Heart left ventricle (tissue), 16 donors: ENCODE measurements at regions of chr5 and their contacts with region 1.

Region 1: DNA sequence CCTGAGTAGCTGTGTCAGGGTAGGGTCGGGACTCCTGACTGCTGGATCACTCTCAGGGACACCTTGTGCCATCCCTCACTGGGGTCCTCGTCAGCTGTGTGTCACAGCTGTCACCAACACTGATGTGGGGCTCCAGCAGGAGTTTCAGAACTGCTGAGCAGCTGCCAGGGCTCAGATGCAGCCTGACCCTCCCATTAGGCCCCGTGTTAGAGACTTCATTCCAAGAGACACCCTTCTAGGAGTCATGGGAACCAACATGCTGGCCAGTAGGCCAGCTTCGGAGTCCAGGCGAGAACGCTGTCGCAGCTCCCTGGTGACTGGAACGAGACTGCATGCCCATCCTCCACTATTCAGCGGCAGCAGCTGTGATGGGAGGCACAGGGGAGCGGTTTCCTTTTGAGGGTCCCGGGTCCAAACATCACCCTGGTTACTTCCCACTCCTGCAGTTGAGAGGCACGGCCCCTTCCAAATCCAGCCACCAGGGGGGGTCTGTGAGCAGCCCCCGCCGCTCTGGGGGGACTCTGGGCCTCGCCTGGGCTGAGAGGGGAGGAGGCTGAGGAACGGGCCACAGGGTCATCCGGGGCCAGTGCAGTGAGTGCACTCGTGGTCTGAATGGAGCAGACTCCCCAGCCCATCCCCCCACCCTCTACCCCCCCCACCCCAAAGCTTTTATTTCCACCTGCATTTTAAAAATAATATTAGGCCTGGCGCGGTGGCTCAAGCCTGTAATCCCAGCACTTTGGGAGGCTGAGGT is 12.6 kb upstream of the TCF7 start:
- DNase-seq: peak in 4 of 5 donors; percentile 53 to 86 (median 63)
- ATAC-seq: peak; percentile 47 to 85 (median 78)
- H3K4me3 ChIP-seq: no peak overlapping the region
- H3K27ac ChIP-seq: no peak overlapping the region
- H3K4me1 ChIP-seq: peaks cover 0 to 34% (median 6%) of the 10 kb centered on the region in 12 donors
- H3K27me3 ChIP-seq: no peaks in the 10 kb centered on the region
- CTCF ChIP-seq: peak; percentile 78 to 96 (median 86)
- POLR2A ChIP-seq: no peak

Region 2: DNA sequence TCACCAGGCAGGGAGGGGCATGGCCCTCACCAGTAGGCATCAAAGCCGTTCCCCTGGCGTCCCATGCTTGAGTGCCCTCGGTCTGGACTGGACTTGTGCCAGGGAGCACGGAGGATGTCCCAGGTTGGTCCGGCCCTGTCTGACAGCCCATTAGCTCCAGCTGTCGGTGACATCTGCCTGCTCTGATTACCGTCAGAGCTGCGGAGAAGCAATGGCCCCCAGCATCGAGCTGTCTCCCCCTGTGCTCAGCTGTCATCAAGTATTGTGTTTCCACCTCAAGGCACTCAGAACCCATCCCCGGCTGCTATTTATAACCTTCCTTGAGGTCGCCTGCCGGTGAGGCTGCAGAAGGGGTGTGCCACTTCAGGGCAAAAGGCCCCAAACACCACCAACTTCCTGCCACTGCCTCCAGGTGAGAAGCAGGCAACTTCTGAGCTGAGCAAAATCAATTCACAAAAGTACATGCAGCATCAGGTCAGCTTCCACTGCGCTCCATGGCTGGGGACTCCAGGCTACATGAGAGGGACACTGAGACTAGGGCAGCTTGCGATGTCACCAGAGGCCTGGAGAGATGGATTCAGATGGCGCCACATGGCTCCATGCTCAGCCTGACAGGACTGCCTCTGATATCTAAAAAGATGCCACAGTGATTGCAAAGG is 276.1 kb before region 1 on chr5:
- intact Hi-C with region 1: no loop called
- DNase-seq: peak in 3 of 5 donors; percentile 40 to 68 (median 50)
- ATAC-seq: peak in 3 of 4 donors; percentile 13 to 64 (median 33)
- H3K4me3 ChIP-seq: no peak overlapping the region
- H3K27ac ChIP-seq: no peak overlapping the region
- H3K4me1 ChIP-seq: peaks cover 0 to 15% (median 5%) of the 10 kb centered on the region in 12 donors
- H3K27me3 ChIP-seq: peaks cover 0 to 12% (median 0%) of the 10 kb centered on the region in 9 donors
- CTCF ChIP-seq: no peak
- POLR2A ChIP-seq: no peak

Region 3: GRCh38 chr5:133996683-133997252 is 105.1 kb before region 1 on chr5:
- intact Hi-C with region 1: no loop called
- DNase-seq: no peak
- ATAC-seq: no peak
- H3K4me3 ChIP-seq: no peak overlapping the region
- H3K27ac ChIP-seq: peak overlapping the region in 8 of 12 donors; percentile 18 to 90 (median 83)
- H3K4me1 ChIP-seq: peaks cover 9 to 99% (median 76%) of the 10 kb centered on the region in 12 donors
- H3K27me3 ChIP-seq: no peaks in the 10 kb centered on the region
- CTCF ChIP-seq: peak in 8 of 12 donors; percentile 8 to 44 (median 27)
- POLR2A ChIP-seq: no peak

Region 4: GRCh38 chr5:134140530-134141201 is 38.8 kb after region 1 on chr5:
- intact Hi-C with region 1: loop called in 9 of 10 experiments (anchors 1 to 5 kb)
- DNase-seq: peak in 4 of 5 donors; percentile 55 to 66 (median 66)
- ATAC-seq: peak; percentile 60 to 79 (median 66)
- H3K4me3 ChIP-seq: no peak overlapping the region
- H3K27ac ChIP-seq: no peak overlapping the region
- H3K4me1 ChIP-seq: peaks cover 0 to 45% (median 22%) of the 10 kb centered on the region in 12 donors
- H3K27me3 ChIP-seq: no peaks in the 10 kb centered on the region
- CTCF ChIP-seq: peak; percentile 63 to 85 (median 73)
- POLR2A ChIP-seq: no peak

Region 5: GRCh38 chr5:134145779-134146581 is 44.1 kb after region 1 on chr5:
- intact Hi-C with region 1: loop called in 8 of 10 experiments (anchors 1 to 5 kb)
- DNase-seq: peak in 4 of 5 donors; percentile 68 to 74 (median 71)
- ATAC-seq: peak; percentile 55 to 88 (median 80)
- H3K4me3 ChIP-seq: no peak overlapping the region
- H3K27ac ChIP-seq: no peak overlapping the region
- H3K4me1 ChIP-seq: peaks cover 0 to 38% (median 20%) of the 10 kb centered on the region in 12 donors
- H3K27me3 ChIP-seq: no peaks in the 10 kb centered on the region
- CTCF ChIP-seq: peak; percentile 87 to 98 (median 94)
- POLR2A ChIP-seq: no peak